ENCODE measurements at regions of chr5 and their contacts with region 1.

Region 1: DNA sequence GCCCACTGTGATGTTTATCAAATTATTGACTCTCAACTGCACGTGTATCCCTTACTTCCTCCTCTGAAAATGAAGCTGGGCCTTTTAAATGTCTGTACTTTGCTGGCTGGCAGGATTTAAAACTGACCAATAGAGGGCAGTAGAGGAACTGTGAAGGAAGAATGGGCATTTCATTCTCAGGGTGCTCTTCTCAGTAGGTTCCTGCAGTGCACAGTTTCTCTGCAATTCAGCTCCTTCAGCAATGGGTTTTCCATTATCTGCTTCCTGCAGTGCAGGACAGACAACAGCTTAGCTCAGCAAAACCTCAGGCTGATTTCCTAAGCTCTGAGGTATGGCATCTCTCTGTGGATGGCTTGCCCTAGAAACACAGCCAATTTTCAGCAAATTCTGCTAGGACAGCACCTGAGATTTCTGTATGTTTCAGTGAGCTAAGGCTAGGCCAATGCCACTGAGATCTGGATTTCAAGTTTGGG is 298.4 kb upstream of the PRDM9 start:
- DNase-seq: peak; percentile 63
- H3K4me3 ChIP-seq: no peak overlapping the region
- H3K27ac ChIP-seq: no peak overlapping the region
- H3K4me1 ChIP-seq: no peaks in the 10 kb centered on the region
- H3K27me3 ChIP-seq: no peaks in the 10 kb centered on the region
- CTCF ChIP-seq: peak; percentile 83

Region 2: DNA sequence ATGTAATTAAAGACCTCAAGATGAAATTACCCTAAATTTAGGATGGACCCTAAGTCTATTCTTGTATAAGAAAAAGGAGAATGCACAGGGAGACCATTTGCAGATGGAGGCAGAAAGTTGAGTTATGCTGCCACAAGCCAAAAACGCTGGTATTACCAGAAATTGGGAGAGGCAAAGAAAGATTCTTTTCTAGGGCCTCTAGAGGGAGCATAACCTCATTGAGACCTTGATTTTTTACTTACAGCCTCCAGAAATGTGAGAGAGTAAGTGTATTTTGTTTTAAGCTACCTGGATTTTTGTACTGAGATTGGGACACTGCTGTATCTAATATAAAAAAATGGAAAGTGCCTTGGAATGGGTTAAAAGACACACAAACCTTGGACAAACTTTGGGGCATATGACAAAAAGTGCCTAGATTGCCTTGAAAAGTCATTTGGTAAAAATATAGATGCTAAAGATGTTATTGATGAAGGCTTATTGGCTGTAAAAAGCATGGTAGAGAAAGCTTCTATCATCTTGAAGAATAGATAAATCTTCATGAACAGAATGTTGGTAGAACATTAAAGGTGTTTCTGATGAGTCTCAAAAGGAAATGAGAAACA is 123.8 kb after region 1 on chr5:
- CTCF ChIA-PET with region 1: no interaction called
- dilution Hi-C with region 1: no loop called
- in situ Hi-C with region 1: no loop called
- intact Hi-C with region 1: loop called (anchors 1 kb)
- DNase-seq: peak; percentile 24
- H3K4me3 ChIP-seq: no peak overlapping the region
- H3K27ac ChIP-seq: no peak overlapping the region
- H3K4me1 ChIP-seq: no peaks in the 10 kb centered on the region
- H3K27me3 ChIP-seq: no peaks in the 10 kb centered on the region
- CTCF ChIP-seq: peak; percentile 58 to 65

Region 3: GRCh38 chr5:23405316-23406068 is 196.5 kb after region 1 on chr5:
- CTCF ChIA-PET with region 1: interaction called, 3 read pairs
- dilution Hi-C with region 1: no loop called
- in situ Hi-C with region 1: no loop called
- intact Hi-C with region 1: loop called (anchors 2 kb)
- DNase-seq: peak; percentile 81
- H3K4me3 ChIP-seq: no peak overlapping the region
- H3K27ac ChIP-seq: peak overlapping the region; percentile 73
- H3K4me1 ChIP-seq: no peaks in the 10 kb centered on the region
- H3K27me3 ChIP-seq: no peaks in the 10 kb centered on the region
- CTCF ChIP-seq: peak; percentile 16 to 17

Region 4: DNA sequence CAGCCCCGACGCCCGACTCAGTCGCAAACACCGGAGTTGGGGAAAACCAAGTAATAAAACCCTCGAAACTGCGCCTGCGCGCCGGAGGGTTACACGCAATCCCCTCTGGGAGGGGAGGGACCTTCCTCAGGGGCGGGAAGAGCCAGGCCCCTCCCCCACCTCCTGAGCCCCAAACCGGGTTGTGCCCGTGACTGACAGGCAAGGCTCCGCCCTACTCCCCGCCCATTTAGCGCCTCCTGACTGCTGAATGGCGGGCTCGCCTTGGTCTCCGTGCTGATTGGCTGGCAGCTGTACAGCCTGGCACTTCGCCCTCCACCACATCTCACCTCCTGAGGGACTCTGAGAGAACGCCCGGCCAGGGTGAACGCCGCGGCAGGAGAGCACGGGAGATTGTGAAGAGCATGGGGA is 298.3 kb after region 1 on chr5 and contains the start of gene PRDM9:
- CTCF ChIA-PET with region 1: no interaction called
- dilution Hi-C with region 1: no loop called
- in situ Hi-C with region 1: no loop called
- intact Hi-C with region 1: loop called (anchors 5 kb)
- DNase-seq: no peak
- H3K4me3 ChIP-seq: no peak within 1 kb of the TSS
- H3K27ac ChIP-seq: no peak within 1 kb of the TSS
- H3K4me1 ChIP-seq: no peaks in the 10 kb centered on the region
- H3K27me3 ChIP-seq: no peaks in the 10 kb centered on the region
- CTCF ChIP-seq: no peak
- total RNA-seq, gene PRDM9: not detected

Region 5: GRCh38 chr5:23742701-23743100 is 533.7 kb after region 1 on chr5:
- CTCF ChIA-PET with region 1: no interaction called
- dilution Hi-C with region 1: no loop called
- in situ Hi-C with region 1: loop called in 1 of 2 experiments (anchors 25 kb)
- intact Hi-C with region 1: loop called (anchors 5 kb)
- DNase-seq: no peak
- H3K4me3 ChIP-seq: no peak overlapping the region
- H3K27ac ChIP-seq: no peak overlapping the region
- H3K4me1 ChIP-seq: no peaks in the 10 kb centered on the region
- H3K27me3 ChIP-seq: no peaks in the 10 kb centered on the region
- CTCF ChIP-seq: peak; percentile 10 to 45

Region 6: GRCh38 chr5:23840084-23840483 is 631.1 kb after region 1 on chr5:
- CTCF ChIA-PET with region 1: interaction called, 10 read pairs
- dilution Hi-C with region 1: no loop called
- in situ Hi-C with region 1: no loop called
- intact Hi-C with region 1: no loop called
- DNase-seq: no peak
- H3K4me3 ChIP-seq: no peak overlapping the region
- H3K27ac ChIP-seq: no peak overlapping the region
- H3K4me1 ChIP-seq: no peaks in the 10 kb centered on the region
- H3K27me3 ChIP-seq: no peaks in the 10 kb centered on the region
- CTCF ChIP-seq: peak; percentile 5 to 32

Measured in mammary epithelial cell (primary cell).